ENCODE measurements at regions of chr7 and their contacts with region 1.

Region 1: DNA sequence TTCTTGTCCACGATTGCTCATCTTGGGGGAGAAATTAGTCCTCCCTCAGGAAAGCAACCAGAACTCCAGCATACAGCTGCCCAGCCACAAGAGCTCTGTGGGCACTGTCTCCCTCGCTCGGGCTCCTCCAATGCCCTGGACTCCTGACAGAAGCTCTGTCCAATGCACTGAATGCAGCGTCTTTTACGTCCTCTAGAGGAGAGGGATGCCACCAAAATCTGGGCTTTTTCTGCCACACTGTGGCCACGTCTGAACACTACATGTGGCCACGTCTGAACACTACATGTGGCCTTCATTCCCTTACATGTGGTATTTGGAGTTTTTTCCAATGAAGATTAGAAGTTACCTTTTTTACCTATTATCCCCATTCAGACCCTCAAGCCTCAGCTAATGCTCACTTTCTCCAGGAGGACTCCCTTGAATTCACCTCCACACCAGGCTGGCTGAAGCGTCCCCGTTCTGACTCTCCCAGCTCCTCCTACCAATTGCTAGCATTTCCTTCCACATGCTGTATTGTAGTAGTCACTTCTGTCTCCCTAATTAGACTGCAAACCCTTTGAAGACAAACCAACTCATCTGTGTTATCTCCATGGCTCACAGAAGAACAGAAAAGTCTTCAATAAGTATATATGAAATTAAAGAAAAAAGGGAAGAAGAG is 134.3 kb upstream of the PDE1C start:
- DNase-seq: peak; percentile 87
- H3K4me3 Mint-ChIP-seq: peak overlapping the region; percentile 38
- H3K27ac Mint-ChIP-seq: no peak overlapping the region
- H3K4me1 Mint-ChIP-seq: no peaks in the 10 kb centered on the region
- H3K27me3 Mint-ChIP-seq: peaks cover 10% of the 10 kb centered on the region
- CTCF ChIP-seq: peak; percentile 92

Region 2: GRCh38 chr7:31500656-31501055 is 703.8 kb before region 1 on chr7:
- CTCF ChIA-PET with region 1: no interaction called
- POLR2A ChIA-PET with region 1: no interaction called
- intact Hi-C with region 1: no loop called
- DNase-seq: no peak
- H3K4me3 Mint-ChIP-seq: no peak overlapping the region
- H3K27ac Mint-ChIP-seq: no peak overlapping the region
- H3K4me1 Mint-ChIP-seq: no peaks in the 10 kb centered on the region
- H3K27me3 Mint-ChIP-seq: no peaks in the 10 kb centered on the region
- CTCF ChIP-seq: no peak

Region 3: GRCh38 chr7:31782411-31782991 is 422.0 kb before region 1 on chr7:
- CTCF ChIA-PET with region 1: interaction called, 32 read pairs
- POLR2A ChIA-PET with region 1: interaction called, 3 read pairs
- intact Hi-C with region 1: loop called (anchors 1 kb)
- DNase-seq: peak; percentile 66
- H3K4me3 Mint-ChIP-seq: no peak overlapping the region
- H3K27ac Mint-ChIP-seq: no peak overlapping the region
- H3K4me1 Mint-ChIP-seq: no peaks in the 10 kb centered on the region
- H3K27me3 Mint-ChIP-seq: no peaks in the 10 kb centered on the region
- CTCF ChIP-seq: peak; percentile 81

Region 4: DNA sequence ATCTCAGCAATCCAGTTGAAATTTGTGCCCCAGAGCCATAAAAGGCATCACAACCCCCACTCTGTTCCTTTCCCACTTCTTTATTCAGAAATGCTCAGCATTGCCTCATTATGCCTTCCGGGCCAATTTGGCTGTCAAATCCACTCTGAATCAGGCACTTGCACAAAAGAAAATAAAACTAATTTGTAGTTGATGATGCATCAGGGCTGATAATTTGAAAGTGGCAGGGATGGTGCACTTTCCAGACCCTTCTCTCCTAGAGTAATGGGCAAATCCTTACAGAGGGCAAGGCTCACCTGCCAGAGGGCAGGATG is 13.6 kb after region 1 on chr7:
- CTCF ChIA-PET with region 1: interaction called, 37 read pairs
- POLR2A ChIA-PET with region 1: no interaction called
- intact Hi-C with region 1: no loop called
- DNase-seq: peak; percentile 27
- H3K4me3 Mint-ChIP-seq: no peak overlapping the region
- H3K27ac Mint-ChIP-seq: no peak overlapping the region
- H3K4me1 Mint-ChIP-seq: no peaks in the 10 kb centered on the region
- H3K27me3 Mint-ChIP-seq: no peaks in the 10 kb centered on the region
- CTCF ChIP-seq: no peak

Region 5: DNA sequence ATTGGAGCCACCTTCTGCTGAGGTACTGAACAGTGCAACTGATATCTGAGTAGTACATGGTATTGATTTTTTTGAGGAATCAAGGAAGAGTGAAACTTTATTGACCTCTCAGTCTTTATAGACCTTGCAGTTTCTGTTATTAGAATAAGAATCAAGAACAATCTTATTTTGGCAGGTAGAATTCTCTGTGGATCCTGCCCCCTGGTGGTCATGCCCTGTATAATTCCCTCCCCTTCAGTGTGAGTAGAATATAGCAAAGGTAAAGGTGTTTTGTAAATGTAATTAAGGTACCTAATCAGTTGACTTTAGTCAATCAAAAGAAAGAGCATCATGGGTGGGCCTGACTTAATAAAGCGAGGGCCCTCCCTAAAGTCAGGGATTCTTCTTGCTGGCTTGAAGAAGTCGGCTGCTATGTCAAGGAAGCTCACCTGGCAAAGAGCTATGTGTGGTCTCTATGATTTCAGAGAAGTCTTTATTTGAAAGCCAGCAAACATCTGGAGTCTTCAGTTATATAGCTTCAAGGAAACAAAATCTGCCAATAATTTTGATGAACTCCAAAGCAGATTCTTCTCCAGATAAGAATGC is 142.8 kb after region 1 on chr7:
- CTCF ChIA-PET with region 1: interaction called, 38 read pairs
- POLR2A ChIA-PET with region 1: no interaction called
- intact Hi-C with region 1: no loop called
- DNase-seq: peak; percentile 55
- H3K4me3 Mint-ChIP-seq: no peak overlapping the region
- H3K27ac Mint-ChIP-seq: no peak overlapping the region
- H3K4me1 Mint-ChIP-seq: no peaks in the 10 kb centered on the region
- H3K27me3 Mint-ChIP-seq: no peaks in the 10 kb centered on the region
- CTCF ChIP-seq: peak; percentile 75

Region 6: DNA sequence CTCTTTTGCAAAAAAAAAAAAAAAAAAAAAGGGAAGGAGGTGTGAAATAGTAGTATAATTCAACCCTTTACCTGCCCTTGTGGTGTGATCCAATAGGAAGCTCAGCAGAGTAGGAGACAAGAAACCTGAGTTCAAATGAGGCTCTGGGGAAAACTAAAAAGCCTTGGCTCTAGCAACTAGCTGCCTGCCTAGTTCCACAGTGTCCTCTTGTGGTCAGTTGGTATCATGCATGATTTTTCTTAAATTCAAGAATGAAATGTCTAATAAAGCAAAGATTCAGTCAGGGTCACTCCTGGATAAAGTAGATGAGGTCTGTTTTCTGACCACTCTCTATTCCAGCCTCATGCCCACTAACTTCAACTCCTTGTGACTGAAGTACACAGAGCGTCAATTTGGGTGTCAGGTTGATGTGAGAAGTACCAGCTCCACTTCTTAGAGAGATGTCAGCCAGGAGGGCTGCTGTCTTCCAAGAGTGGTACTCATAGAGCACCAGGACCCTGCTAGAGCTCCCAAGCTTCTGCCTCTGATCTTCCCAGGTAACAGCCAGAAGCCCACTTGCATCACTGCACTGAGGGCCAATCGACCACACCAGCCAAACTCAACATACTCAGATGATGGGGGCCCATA is 275.2 kb after region 1 on chr7:
- CTCF ChIA-PET with region 1: interaction called, 176 read pairs
- POLR2A ChIA-PET with region 1: no interaction called
- intact Hi-C with region 1: no loop called
- DNase-seq: peak; percentile 63
- H3K4me3 Mint-ChIP-seq: no peak overlapping the region
- H3K27ac Mint-ChIP-seq: no peak overlapping the region
- H3K4me1 Mint-ChIP-seq: peaks cover 9% of the 10 kb centered on the region
- H3K27me3 Mint-ChIP-seq: no peaks in the 10 kb centered on the region
- CTCF ChIP-seq: peak; percentile 85

Measured in MCF 10A (cell line).